Caco-2 (cell line): ENCODE measurements at regions of chr16 and their contacts with region 1.

Region 1: DNA sequence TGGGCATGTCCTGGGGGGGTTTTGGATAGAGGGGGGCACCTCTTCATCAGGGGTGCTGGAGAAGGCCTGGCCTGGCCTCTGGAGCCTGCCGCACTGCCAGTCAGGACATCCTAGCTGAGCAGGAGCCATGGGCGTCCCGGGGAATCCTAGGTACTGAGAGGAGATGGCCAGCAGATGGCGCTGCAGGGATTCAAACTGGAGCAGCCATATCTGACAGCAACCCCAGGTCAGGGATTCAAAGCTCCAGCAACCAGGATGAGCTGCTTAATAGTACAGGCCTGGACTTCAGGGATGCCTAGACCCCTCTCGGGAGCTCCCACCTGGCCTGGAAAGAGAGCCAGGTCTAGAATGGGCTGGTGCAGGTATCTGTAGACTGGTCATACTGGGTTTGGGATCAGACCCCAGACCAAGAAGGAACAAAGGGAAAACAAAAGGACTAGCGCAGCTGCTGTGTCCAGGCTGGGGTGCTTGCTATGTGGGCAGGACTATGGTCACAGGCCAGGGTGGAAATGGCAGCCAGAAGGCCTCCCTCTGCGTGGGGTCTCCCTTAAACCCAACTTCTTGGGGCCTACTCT is 306.9 kb upstream of the RBFOX1 start:
- DNase-seq: peak; percentile 78 to 83
- H3K4me3 ChIP-seq: no peak overlapping the region
- H3K4me3 Mint-ChIP-seq: no peak overlapping the region
- H3K27ac Mint-ChIP-seq: no peak overlapping the region
- H3K4me1 ChIP-seq: peaks cover 3% of the 10 kb centered on the region
- H3K4me1 Mint-ChIP-seq: peaks cover 17% of the 10 kb centered on the region
- H3K27me3 ChIP-seq: no peaks in the 10 kb centered on the region
- H3K27me3 Mint-ChIP-seq: no peaks in the 10 kb centered on the region
- CTCF ChIP-seq: peak; percentile 68 to 78

Region 2: GRCh38 chr16:5175266-5175665 is 1850.4 kb before region 1 on chr16:
- CTCF ChIA-PET with region 1: no interaction called
- POLR2A ChIA-PET with region 1: no interaction called
- intact Hi-C with region 1: no loop called
- DNase-seq: no peak
- H3K4me3 ChIP-seq: no peak overlapping the region
- H3K4me3 Mint-ChIP-seq: no peak overlapping the region
- H3K27ac Mint-ChIP-seq: no peak overlapping the region
- H3K4me1 ChIP-seq: no peaks in the 10 kb centered on the region
- H3K4me1 Mint-ChIP-seq: no peaks in the 10 kb centered on the region
- H3K27me3 ChIP-seq: no peaks in the 10 kb centered on the region
- H3K27me3 Mint-ChIP-seq: peaks cover 5% of the 10 kb centered on the region
- CTCF ChIP-seq: no peak

Region 3: GRCh38 chr16:6682142-6682811 is 343.4 kb before region 1 on chr16:
- CTCF ChIA-PET with region 1: interaction called, 16 read pairs
- POLR2A ChIA-PET with region 1: no interaction called
- intact Hi-C with region 1: loop called (anchors 10 kb)
- DNase-seq: peak; percentile 35 to 37
- H3K4me3 ChIP-seq: no peak overlapping the region
- H3K4me3 Mint-ChIP-seq: no peak overlapping the region
- H3K27ac Mint-ChIP-seq: no peak overlapping the region
- H3K4me1 ChIP-seq: no peaks in the 10 kb centered on the region
- H3K4me1 Mint-ChIP-seq: no peaks in the 10 kb centered on the region
- H3K27me3 ChIP-seq: no peaks in the 10 kb centered on the region
- H3K27me3 Mint-ChIP-seq: no peaks in the 10 kb centered on the region
- CTCF ChIP-seq: peak; percentile 47 to 55

Region 4: GRCh38 chr16:6993559-6993958 is 32.1 kb before region 1 on chr16:
- CTCF ChIA-PET with region 1: no interaction called
- POLR2A ChIA-PET with region 1: no interaction called
- intact Hi-C with region 1: no loop called
- DNase-seq: no peak
- H3K4me3 ChIP-seq: no peak overlapping the region
- H3K4me3 Mint-ChIP-seq: no peak overlapping the region
- H3K27ac Mint-ChIP-seq: no peak overlapping the region
- H3K4me1 ChIP-seq: no peaks in the 10 kb centered on the region
- H3K4me1 Mint-ChIP-seq: no peaks in the 10 kb centered on the region
- H3K27me3 ChIP-seq: no peaks in the 10 kb centered on the region
- H3K27me3 Mint-ChIP-seq: peaks cover 6% of the 10 kb centered on the region
- CTCF ChIP-seq: no peak

Region 5: DNA sequence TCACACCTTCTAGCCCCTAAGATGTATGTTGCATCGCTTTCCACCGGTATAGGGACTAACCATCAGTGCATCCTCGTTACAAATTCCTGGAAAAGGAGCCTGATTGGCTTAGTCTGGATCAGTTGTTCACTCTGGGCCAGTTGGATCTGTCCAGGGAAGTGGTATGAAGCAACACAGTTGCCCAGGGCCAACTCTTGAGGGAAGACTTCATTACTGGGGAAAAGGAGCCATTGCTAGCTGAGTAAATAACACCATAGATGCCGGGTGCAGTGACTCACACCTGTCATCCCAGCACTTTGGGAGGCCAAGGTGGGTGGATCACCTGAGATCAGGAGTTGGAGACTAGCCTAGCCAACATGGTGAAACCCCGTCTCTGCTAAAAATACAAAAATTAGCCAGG is 31.8 kb after region 1 on chr16:
- CTCF ChIA-PET with region 1: interaction called, 10 read pairs
- POLR2A ChIA-PET with region 1: no interaction called
- intact Hi-C with region 1: loop called (anchors 2 kb)
- DNase-seq: peak; percentile 57 to 63
- H3K4me3 ChIP-seq: no peak overlapping the region
- H3K4me3 Mint-ChIP-seq: peak overlapping the region; percentile 59
- H3K27ac Mint-ChIP-seq: peak overlapping the region; percentile 72
- H3K4me1 ChIP-seq: peaks cover 45% of the 10 kb centered on the region
- H3K4me1 Mint-ChIP-seq: peaks cover 21% of the 10 kb centered on the region
- H3K27me3 ChIP-seq: no peaks in the 10 kb centered on the region
- H3K27me3 Mint-ChIP-seq: no peaks in the 10 kb centered on the region
- CTCF ChIP-seq: no peak

Region 6: GRCh38 chr16:7086822-7087616 is 61.3 kb after region 1 on chr16:
- CTCF ChIA-PET with region 1: interaction called, 10 read pairs
- POLR2A ChIA-PET with region 1: no interaction called
- intact Hi-C with region 1: loop called (anchors 1 kb)
- DNase-seq: peak; percentile 58 to 60
- H3K4me3 ChIP-seq: no peak overlapping the region
- H3K4me3 Mint-ChIP-seq: no peak overlapping the region
- H3K27ac Mint-ChIP-seq: no peak overlapping the region
- H3K4me1 ChIP-seq: no peaks in the 10 kb centered on the region
- H3K4me1 Mint-ChIP-seq: no peaks in the 10 kb centered on the region
- H3K27me3 ChIP-seq: no peaks in the 10 kb centered on the region
- H3K27me3 Mint-ChIP-seq: peaks cover 5% of the 10 kb centered on the region
- CTCF ChIP-seq: peak; percentile 65 to 68

Region 7: DNA sequence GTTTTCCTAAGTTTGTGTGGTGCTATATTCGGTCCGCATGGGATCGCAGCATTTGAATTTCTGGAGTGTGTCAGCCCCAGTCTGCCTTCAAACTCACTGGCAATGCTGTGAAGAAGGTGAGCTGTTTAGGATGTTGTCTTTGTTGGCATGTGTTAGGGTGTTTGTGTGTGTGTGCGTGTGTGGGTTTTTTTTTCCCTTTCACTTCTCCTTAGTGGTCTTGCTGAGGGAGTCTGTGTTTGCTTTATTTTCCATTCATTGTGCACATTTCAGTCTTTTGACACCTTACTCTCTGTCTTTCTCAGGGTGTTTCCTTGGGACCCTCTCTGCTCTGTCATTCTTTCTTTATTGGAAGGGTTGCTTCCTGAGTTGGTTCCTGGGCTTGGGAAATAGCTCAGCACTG is 279.3 kb after region 1 on chr16:
- CTCF ChIA-PET with region 1: no interaction called
- POLR2A ChIA-PET with region 1: no interaction called
- intact Hi-C with region 1: loop called (anchors 5 kb)
- DNase-seq: no peak
- H3K4me3 ChIP-seq: no peak overlapping the region
- H3K4me3 Mint-ChIP-seq: no peak overlapping the region
- H3K27ac Mint-ChIP-seq: no peak overlapping the region
- H3K4me1 ChIP-seq: no peaks in the 10 kb centered on the region
- H3K4me1 Mint-ChIP-seq: no peaks in the 10 kb centered on the region
- H3K27me3 ChIP-seq: no peaks in the 10 kb centered on the region
- H3K27me3 Mint-ChIP-seq: peaks cover 22% of the 10 kb centered on the region
- CTCF ChIP-seq: no peak